ENCODE measurements at regions of chr9 and their contacts with region 1.

Region 1: DNA sequence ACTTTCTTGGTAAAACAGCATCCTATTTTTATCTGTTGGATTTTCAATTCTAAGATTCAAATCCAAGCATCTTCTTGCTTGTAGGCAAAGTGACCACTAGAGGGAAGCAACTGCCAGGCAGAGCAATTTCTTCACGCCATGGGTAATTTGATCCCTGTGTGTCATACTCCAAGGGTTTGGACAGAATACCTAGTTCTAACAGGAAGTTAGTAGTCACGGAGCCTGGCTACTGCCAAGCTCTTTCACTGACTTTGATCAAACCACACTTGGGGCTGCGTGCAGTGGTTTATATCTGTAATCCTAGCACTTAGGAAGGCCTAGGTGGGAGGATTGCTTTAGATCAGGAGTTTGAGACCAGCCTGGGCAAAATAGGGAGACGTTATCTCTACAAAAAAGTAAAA is 473.6 kb upstream of the TNC start:
- DNase-seq: peak; percentile 16 to 91
- H3K4me3 ChIP-seq: no peak overlapping the region
- H3K27ac ChIP-seq: peak overlapping the region; percentile 51 to 55
- H3K4me1 ChIP-seq: peaks cover 0 to 16% of the 10 kb centered on the region in 2 donors
- H3K27me3 ChIP-seq: no peaks in the 10 kb centered on the region
- CTCF ChIP-seq: peak; percentile 65 to 87 (median 81)

Region 2: DNA sequence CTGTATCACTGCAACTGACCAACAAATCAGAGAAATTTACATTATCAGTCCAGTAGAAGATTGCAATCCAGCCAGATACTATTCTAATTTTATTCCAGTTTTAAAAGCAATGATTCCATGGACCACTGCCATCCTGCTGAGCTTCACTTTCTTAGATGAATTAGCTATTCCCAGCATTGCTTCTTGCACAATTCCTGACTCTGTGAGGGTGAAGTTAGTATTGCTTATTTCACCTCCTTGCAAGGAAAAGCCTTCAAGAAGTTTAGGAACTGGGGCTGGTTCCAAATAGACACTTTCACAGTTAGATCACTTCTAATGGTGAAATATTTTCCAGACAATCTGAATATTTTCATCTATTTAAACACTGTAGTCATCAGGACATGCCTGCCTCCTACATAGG is 135.1 kb before region 1 on chr9:
- intact Hi-C with region 1: no loop called
- DNase-seq: peak in 1 of 2 donors; percentile 68
- H3K4me3 ChIP-seq: no peak overlapping the region
- H3K27ac ChIP-seq: peak overlapping the region; percentile 9 to 35
- H3K4me1 ChIP-seq: peaks cover 5 to 14% of the 10 kb centered on the region in 2 donors
- H3K27me3 ChIP-seq: no peaks in the 10 kb centered on the region
- CTCF ChIP-seq: no peak

Region 3: DNA sequence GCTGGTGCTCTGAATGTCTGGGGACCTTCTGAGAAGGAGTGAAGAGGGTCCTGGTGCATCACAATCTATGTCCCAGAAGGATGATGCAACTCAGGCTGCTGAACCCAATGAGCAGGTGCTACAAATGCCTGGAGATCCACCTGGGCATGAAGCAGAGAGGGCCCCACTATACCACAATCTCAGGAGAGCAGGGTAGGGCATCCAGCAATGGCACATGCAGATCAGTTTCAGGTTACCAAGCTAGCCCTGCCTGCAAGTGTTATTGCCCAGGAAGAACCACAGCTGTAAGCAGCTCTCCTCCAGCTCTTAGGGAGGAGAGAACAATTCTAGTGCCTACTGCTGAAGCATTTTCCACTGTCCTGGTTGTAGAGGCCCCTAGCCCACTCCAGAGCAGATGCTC is 84.4 kb before region 1 on chr9:
- intact Hi-C with region 1: no loop called
- DNase-seq: no peak
- H3K4me3 ChIP-seq: no peak overlapping the region
- H3K27ac ChIP-seq: no peak overlapping the region
- H3K4me1 ChIP-seq: no peaks in the 10 kb centered on the region
- H3K27me3 ChIP-seq: no peaks in the 10 kb centered on the region
- CTCF ChIP-seq: no peak

Region 4: DNA sequence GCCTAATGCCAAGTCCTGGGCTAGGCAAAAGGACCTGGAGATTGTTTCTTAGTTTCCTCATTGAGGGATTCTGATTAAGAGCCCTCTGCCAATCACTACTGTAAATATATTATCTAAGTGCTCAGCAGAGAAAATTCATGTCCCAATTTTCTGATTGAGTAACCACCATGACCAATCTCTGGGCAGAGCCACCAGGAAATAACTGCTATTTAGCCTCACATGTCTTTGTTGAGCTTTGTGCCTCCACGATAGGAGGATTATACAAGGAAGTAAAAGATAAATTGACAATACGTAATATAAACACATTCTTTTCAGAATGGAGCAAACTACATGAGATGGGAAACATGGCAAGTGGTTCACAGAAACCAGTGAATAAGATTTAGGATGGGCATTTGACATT is 165.9 kb after region 1 on chr9:
- intact Hi-C with region 1: loop called (anchors 5 kb)
- DNase-seq: no peak
- H3K4me3 ChIP-seq: no peak overlapping the region
- H3K27ac ChIP-seq: no peak overlapping the region
- H3K4me1 ChIP-seq: peaks cover 4 to 25% of the 10 kb centered on the region in 2 donors
- H3K27me3 ChIP-seq: no peaks in the 10 kb centered on the region
- CTCF ChIP-seq: no peak

Region 5: DNA sequence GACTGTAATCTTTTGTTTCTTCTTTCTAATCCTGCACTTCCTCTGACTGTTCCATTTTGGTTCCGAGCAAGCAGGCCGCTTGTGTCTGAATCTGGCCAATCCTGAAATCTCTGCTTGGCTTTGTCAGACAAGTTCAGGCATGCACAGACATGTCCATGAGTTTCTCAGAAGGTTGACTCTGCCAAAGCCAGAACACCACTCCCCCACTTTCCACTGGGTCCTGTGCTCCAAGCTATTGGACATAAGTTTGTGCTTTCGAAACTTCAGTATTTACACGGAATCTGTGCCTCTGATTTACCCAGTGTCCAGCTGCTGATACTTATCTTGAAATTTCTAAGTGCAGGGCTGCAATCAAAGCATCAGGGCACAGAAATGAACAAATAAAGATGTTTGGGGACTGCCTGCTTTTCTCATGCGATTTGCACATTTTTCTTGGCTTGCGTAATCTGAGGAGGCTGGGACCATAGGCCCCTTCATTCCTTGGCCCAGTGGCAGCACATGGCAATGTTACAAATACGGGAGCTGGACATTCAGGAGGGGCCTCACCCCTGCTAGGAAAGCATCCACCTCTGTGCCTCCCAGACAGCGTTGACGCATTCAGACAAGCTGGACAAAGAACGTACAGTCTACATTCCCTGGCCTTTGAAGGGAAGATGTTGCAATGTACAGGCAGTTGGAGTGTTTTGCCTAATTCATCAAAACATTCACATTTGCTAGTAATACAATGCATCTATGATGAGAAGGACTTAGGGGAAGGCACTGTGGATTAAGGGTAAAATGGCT is 352.8 kb after region 1 on chr9:
- intact Hi-C with region 1: loop called (anchors 5 kb)
- DNase-seq: peak in 1 of 2 donors; percentile 95
- H3K4me3 ChIP-seq: peak overlapping the region in 1 of 2 donors; percentile 10
- H3K27ac ChIP-seq: peak overlapping the region; percentile 83 to 90
- H3K4me1 ChIP-seq: peaks cover 0 to 18% of the 10 kb centered on the region in 2 donors
- H3K27me3 ChIP-seq: no peaks in the 10 kb centered on the region
- CTCF ChIP-seq: no peak

Region 6: DNA sequence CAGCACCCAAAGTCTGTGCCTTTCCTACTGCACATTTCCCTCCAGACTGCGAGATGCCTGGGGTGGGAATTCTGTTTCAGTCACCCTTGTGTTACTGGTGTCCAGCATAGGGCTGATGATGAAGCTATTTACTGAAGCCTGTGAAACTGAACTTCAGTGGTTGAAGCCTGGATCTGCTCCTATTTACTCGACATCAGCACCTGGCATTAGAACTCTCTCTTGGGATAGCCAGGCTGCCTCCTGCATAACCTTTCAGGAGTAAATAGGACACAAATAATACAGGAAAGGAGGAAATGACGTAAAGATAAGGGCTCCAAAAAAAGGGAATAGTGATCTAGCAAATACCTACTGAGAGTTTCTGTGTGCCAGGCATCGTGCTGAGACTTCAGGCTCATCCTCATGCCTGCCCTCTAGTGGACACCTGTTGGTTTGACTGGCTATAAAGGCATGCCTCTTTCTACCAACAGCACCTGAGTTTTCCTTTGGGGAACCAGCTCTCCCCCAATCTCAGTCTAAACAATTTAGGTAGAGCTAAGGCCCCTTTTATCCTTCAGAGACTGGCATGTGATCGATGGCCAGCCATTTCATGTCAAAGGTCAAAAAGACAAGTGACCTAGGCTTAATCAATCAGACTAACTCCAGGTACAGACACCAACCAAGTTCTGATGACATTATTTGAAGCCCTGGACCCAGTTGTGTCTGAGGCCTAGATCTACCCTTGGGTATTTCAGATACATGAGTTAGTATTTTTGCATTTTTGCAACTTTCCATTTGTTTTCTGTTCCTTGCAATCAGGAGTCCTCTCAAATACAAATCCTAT is 903.4 kb after region 1 on chr9:
- intact Hi-C with region 1: loop called (anchors 10 kb)
- DNase-seq: no peak
- H3K4me3 ChIP-seq: no peak overlapping the region
- H3K27ac ChIP-seq: no peak overlapping the region
- H3K4me1 ChIP-seq: no peaks in the 10 kb centered on the region
- H3K27me3 ChIP-seq: no peaks in the 10 kb centered on the region
- CTCF ChIP-seq: peak; percentile 12 to 60 (median 41)

Region 7: GRCh38 chr9:116661037-116661954 is 1069.7 kb after region 1 on chr9:
- intact Hi-C with region 1: loop called (anchors 1 kb)
- DNase-seq: no peak
- H3K4me3 ChIP-seq: no peak overlapping the region
- H3K27ac ChIP-seq: no peak overlapping the region
- H3K4me1 ChIP-seq: peaks cover 0 to 2% of the 10 kb centered on the region in 2 donors
- H3K27me3 ChIP-seq: no peaks in the 10 kb centered on the region
- CTCF ChIP-seq: peak; percentile 55 to 76 (median 57)